ENCODE measurements at regions of chr3 and their contacts with region 1.

Region 1: DNA sequence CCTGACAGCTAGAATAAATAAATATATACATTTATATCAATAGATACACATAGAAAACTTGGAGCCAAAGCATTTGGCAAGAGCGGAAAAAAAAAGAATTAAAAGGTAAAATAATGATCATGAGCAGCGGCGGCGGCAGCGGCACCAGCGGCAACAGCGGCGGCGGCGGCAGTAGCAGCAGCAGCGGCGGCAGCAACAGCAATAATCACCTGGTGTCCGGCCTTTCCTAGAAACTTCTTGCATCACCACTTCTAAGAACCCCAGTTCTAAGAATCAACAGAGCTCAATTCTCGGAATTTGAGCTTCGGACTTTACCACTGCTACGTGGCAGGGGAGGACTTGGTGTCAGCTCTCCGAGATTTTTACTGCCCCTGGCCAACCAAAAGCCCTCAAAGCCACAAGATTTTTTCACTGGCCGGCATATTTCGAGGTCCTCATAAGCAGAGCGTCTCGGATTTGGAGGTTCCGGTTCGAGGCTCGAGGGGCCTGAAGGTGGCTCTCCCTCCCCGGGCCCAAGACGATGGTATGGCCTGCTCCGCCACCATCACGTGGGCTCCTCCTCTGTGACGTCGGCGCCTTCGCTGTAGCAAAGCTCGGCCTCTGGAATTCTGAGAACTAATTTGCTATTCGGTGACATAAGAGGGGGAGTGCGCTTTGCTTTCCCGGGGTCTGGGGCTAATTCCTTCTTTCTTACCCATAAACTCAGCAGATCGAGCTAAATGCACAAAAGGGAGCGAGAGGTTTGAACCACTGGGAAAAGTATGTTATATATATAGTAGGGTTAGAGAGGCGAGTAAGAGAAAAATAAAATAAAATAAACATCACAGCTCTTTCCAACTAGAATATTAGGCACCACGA is at the start of gene BCL6:
- DNase-seq: peak; percentile 90
- ATAC-seq: peak; percentile 38
- H3K4me3 Mint-ChIP-seq: peak within 1 kb of the TSS; percentile 99
- H3K27ac Mint-ChIP-seq: peak within 1 kb of the TSS; percentile 99
- H3K4me1 Mint-ChIP-seq: peaks cover 53% of the 10 kb centered on the region
- H3K27me3 Mint-ChIP-seq: no peaks in the 10 kb centered on the region
- total RNA-seq, gene BCL6: 32.1 to 34.0 TPM

Region 2: GRCh38 chr3:187770224-187770623 is 24.8 kb after region 1 on chr3:
- POLR2A ChIA-PET with region 1: no interaction called
- DNase-seq: no peak
- ATAC-seq: peak; percentile 26
- H3K4me3 Mint-ChIP-seq: no peak overlapping the region
- H3K27ac Mint-ChIP-seq: peak overlapping the region; percentile 18
- H3K4me1 Mint-ChIP-seq: peaks cover 32% of the 10 kb centered on the region
- H3K27me3 Mint-ChIP-seq: no peaks in the 10 kb centered on the region

Region 3: GRCh38 chr3:187788984-187789857 is 43.8 kb after region 1 on chr3:
- POLR2A ChIA-PET with region 1: no interaction called
- DNase-seq: no peak
- ATAC-seq: no peak
- H3K4me3 Mint-ChIP-seq: no peak overlapping the region
- H3K27ac Mint-ChIP-seq: no peak overlapping the region
- H3K4me1 Mint-ChIP-seq: peaks cover 19% of the 10 kb centered on the region
- H3K27me3 Mint-ChIP-seq: no peaks in the 10 kb centered on the region

Region 4: DNA sequence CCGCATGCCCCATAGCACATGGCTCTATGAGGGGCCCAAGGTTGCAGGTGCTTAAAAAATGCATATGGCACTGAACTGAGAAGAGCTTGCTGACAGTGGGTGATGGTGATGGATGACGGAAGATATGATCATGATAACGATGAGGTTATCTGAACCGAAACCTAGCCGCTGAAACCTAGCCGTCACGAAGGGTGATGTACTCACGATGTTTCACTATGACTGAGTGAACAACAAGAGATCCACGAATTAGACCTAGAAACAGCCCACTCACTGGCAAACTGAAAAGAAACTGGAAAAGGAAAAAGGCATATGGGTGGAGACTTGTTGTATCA is 57.5 kb after region 1 on chr3:
- POLR2A ChIA-PET with region 1: interaction called, 271 read pairs
- DNase-seq: no peak
- ATAC-seq: peak; percentile 50
- H3K4me3 Mint-ChIP-seq: peak overlapping the region; percentile 73
- H3K27ac Mint-ChIP-seq: peak overlapping the region; percentile 95
- H3K4me1 Mint-ChIP-seq: peaks cover 75% of the 10 kb centered on the region
- H3K27me3 Mint-ChIP-seq: no peaks in the 10 kb centered on the region

Region 5: GRCh38 chr3:187963677-187964385 is 218.4 kb after region 1 on chr3:
- POLR2A ChIA-PET with region 1: interaction called, 17 read pairs
- DNase-seq: no peak
- ATAC-seq: peak; percentile 49
- H3K4me3 Mint-ChIP-seq: no peak overlapping the region
- H3K27ac Mint-ChIP-seq: peak overlapping the region; percentile 67
- H3K4me1 Mint-ChIP-seq: peaks cover 30% of the 10 kb centered on the region
- H3K27me3 Mint-ChIP-seq: no peaks in the 10 kb centered on the region

Region 6: DNA sequence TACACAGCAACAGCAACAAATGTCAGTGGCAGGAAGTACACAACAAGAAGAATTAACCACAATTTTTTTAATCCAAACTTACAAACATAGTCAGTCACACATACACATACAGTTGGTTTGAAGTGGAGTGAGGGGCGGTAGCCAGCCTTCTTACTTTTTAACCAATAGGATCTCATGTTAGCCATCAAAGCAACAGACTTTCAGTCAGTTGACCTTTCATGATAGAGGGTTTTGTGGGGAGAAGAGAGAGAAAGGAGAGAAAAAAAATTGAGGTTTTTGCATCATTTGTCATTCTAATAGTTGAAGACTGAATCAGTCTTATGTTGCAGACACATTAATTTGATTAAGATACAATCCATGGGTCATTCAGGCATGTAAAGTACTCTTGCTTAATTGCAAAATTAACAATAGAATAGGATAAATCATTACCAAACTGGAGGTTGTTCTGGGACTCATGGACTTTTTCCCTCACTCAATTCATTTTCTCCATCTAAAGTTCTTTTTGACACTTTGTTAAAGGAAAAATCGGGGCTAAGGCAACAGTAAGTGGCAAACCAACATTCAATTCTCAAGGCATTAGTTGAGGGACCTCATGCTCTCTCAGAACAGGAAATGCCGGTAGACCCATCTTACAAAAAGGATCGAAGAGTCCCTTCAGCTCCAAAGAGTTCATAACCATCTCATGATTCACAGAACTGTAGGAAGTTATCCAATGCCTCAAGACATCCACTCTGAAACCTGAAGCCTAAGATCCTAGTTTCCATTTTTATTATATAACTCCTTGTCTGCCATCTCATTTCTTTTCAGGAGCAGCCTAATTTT is 249.0 kb after region 1 on chr3:
- POLR2A ChIA-PET with region 1: interaction called, 57 read pairs
- DNase-seq: no peak
- ATAC-seq: peak; percentile 90
- H3K4me3 Mint-ChIP-seq: peak overlapping the region; percentile 65
- H3K27ac Mint-ChIP-seq: peak overlapping the region; percentile 80
- H3K4me1 Mint-ChIP-seq: peaks cover 69% of the 10 kb centered on the region
- H3K27me3 Mint-ChIP-seq: no peaks in the 10 kb centered on the region

Region 7: GRCh38 chr3:188051801-188052168 is 306.4 kb after region 1 on chr3:
- POLR2A ChIA-PET with region 1: interaction called, 13 read pairs
- DNase-seq: no peak
- ATAC-seq: no peak
- H3K4me3 Mint-ChIP-seq: no peak overlapping the region
- H3K27ac Mint-ChIP-seq: no peak overlapping the region
- H3K4me1 Mint-ChIP-seq: peaks cover 26% of the 10 kb centered on the region
- H3K27me3 Mint-ChIP-seq: no peaks in the 10 kb centered on the region